A673 (cell line): ENCODE measurements at regions of chr2 and their contacts with region 1.

Region 1: GRCh38 chr2:43461453-43462073 is 134.3 kb downstream of the THADA start:
- DNase-seq: no peak
- H3K4me3 ChIP-seq: no peak overlapping the region
- H3K27ac ChIP-seq: no peak overlapping the region
- H3K4me1 ChIP-seq: peaks cover 8% of the 10 kb centered on the region
- H3K27me3 ChIP-seq: no peaks in the 10 kb centered on the region
- CTCF ChIP-seq: no peak

Region 2: GRCh38 chr2:43426305-43427031 is 35.1 kb before region 1 on chr2:
- CTCF ChIA-PET with region 1: no interaction called
- POLR2A ChIA-PET with region 1: no interaction called
- intact Hi-C with region 1: no loop called
- DNase-seq: peak; percentile 88
- H3K4me3 ChIP-seq: no peak overlapping the region
- H3K27ac ChIP-seq: peak overlapping the region; percentile 55
- H3K4me1 ChIP-seq: peaks cover 27% of the 10 kb centered on the region
- H3K27me3 ChIP-seq: no peaks in the 10 kb centered on the region
- CTCF ChIP-seq: no peak

Region 3: GRCh38 chr2:44462934-44463849 is 1001.6 kb after region 1 on chr2:
- CTCF ChIA-PET with region 1: no interaction called
- POLR2A ChIA-PET with region 1: interaction called, 10 read pairs
- intact Hi-C with region 1: no loop called
- DNase-seq: no peak
- H3K4me3 ChIP-seq: no peak overlapping the region
- H3K27ac ChIP-seq: no peak overlapping the region
- H3K4me1 ChIP-seq: no peaks in the 10 kb centered on the region
- H3K27me3 ChIP-seq: no peaks in the 10 kb centered on the region
- CTCF ChIP-seq: no peak